Activated CD4-positive, alpha-beta T cell treated with anti-CD3 and anti-CD28 coated beads, Interleukin-2, amount 10 ng/mL, durations not matched to agents 24 days and 14 days (primary cell): ENCODE measurements at regions of chr1 and their contacts with region 1.

Region 1: GRCh38 chr1:24526940-24527542 is 24.4 kb downstream of the RCAN3 start:
- DNase-seq: peak; percentile 83
- H3K4me3 Mint-ChIP-seq: no peak overlapping the region
- H3K27ac Mint-ChIP-seq: no peak overlapping the region
- H3K4me1 Mint-ChIP-seq: peaks cover 7% of the 10 kb centered on the region
- H3K27me3 Mint-ChIP-seq: no peaks in the 10 kb centered on the region

Region 2: GRCh38 chr1:24415334-24415909 is 111.6 kb before region 1 on chr1 and contains the start of gene NIPAL3:
- intact Hi-C with region 1: loop called (anchors 1 kb)
- DNase-seq: peak; percentile 99
- H3K4me3 Mint-ChIP-seq: peak within 1 kb of the TSS; percentile 88
- H3K27ac Mint-ChIP-seq: peak within 1 kb of the TSS; percentile 90
- H3K4me1 Mint-ChIP-seq: peaks cover 53% of the 10 kb centered on the region
- H3K27me3 Mint-ChIP-seq: no peaks in the 10 kb centered on the region
- total RNA-seq, gene NIPAL3: 25.1 and 26.3 TPM in 2 replicates

Region 3: DNA sequence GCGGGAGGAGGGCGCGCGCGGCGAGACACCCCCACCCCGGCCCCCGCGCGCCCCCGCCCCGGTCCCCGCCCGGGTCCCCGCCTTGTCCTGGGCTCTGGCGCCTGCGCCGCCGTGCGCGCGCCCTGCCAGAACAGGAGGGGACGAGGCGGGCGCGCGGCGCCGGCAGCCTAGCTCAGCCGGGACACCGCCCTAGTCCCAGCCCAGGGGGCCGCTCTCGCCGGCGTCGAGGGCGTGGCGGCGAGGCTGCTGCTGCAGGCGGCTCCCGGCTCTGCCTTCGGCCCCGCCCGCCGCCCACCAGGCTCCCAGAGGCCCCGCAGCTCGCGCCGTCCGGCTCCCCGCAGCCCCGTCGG is 24.4 kb before region 1 on chr1 and contains the start of gene RCAN3:
- intact Hi-C with region 1: no loop called
- DNase-seq: peak; percentile 97
- H3K4me3 Mint-ChIP-seq: peak within 1 kb of the TSS; percentile 95
- H3K27ac Mint-ChIP-seq: peak within 1 kb of the TSS; percentile 99
- H3K4me1 Mint-ChIP-seq: peaks cover 65% of the 10 kb centered on the region
- H3K27me3 Mint-ChIP-seq: no peaks in the 10 kb centered on the region
- total RNA-seq, gene RCAN3: 31.2 and 31.6 TPM in 2 replicates